HEK293 (cell line): ENCODE measurements at regions of chr5 and their contacts with region 1.

Region 1: GRCh38 chr5:139633295-139634027 is 14.7 kb upstream of the CXXC5 start:
- H3K4me3 ChIP-seq: no peak overlapping the region
- H3K27ac ChIP-seq: no peak overlapping the region
- H3K4me1 ChIP-seq: peaks cover 2% of the 10 kb centered on the region; the same call in 1 of the 2 replicates
- CTCF ChIP-seq: peak; percentile 96

Region 2: DNA sequence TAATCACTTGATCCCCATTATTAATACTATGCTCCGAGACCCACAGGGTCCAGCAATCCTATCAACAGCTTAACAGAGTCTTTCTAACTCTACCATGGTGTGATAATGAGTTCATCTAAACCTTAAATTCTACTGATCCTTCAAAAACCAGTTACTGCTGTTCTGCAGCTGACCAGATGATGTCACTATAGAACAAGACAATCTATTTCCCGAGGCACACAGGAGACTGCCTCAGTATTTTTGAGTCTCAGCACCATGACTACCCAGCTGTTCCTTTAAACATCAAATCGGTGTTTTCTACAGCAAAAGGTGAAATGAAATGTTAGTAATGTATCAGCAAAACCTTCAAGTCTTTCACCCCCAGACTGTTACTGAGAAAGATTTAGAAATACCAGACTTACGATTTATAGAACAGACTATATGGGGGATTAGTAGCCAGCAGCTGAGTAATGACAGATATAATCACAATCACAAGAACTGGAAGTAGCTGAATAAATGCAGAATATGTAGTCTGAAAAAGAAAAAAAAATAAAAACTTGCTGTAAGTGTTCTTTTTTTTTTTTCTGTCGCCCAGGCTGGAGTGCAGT is 211.1 kb before region 1 on chr5:
- CTCF ChIA-PET with region 1: interaction called, 11 read pairs
- POLR2A ChIA-PET with region 1: no interaction called
- H3K4me3 ChIP-seq: no peak overlapping the region
- H3K27ac ChIP-seq: no peak overlapping the region
- H3K4me1 ChIP-seq: no peaks in the 10 kb centered on the region
- CTCF ChIP-seq: peak; percentile 70

Region 3: DNA sequence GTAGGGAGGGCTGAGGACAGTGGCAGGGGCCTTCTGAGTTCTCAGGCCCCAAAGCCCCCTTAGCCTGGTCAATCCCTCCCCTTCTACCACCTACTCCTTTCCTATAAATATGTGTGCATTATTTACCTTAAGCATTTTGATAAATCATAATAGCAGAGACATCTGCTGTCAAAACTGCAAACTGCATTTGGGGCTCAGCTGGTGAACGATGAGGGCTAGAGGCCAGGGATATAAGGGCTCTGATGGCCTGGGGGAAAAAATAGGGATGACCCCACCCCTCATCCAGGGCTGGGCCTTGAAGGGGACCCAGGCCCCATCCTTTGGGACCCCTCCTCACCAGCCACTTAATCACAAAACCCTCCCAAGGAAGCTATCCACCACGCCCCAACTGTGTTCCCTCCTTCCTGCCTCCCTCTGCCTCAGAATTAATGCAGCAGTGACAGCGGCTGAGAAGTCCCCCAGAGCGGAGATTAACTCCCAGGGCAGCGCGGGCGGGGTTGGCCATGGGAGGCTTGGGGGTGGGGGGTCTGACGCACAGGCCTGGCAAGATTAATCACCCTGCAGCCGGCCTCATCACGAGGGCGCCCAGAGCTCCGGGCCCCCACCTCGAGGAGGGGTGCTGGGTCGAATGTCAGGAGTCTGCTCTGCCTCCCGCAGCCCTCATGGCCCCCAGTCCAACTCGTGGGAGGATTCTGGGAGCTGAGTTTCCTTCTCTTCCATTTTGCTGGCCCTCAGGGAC is 56.8 kb after region 1 on chr5:
- CTCF ChIA-PET with region 1: interaction called, 74 read pairs
- POLR2A ChIA-PET with region 1: no interaction called
- H3K4me3 ChIP-seq: no peak overlapping the region
- H3K27ac ChIP-seq: no peak overlapping the region
- H3K4me1 ChIP-seq: no peaks in the 10 kb centered on the region
- CTCF ChIP-seq: 0 out of 2 replicates have a peak, but pooled peaks have one; percentile 14

Region 4: DNA sequence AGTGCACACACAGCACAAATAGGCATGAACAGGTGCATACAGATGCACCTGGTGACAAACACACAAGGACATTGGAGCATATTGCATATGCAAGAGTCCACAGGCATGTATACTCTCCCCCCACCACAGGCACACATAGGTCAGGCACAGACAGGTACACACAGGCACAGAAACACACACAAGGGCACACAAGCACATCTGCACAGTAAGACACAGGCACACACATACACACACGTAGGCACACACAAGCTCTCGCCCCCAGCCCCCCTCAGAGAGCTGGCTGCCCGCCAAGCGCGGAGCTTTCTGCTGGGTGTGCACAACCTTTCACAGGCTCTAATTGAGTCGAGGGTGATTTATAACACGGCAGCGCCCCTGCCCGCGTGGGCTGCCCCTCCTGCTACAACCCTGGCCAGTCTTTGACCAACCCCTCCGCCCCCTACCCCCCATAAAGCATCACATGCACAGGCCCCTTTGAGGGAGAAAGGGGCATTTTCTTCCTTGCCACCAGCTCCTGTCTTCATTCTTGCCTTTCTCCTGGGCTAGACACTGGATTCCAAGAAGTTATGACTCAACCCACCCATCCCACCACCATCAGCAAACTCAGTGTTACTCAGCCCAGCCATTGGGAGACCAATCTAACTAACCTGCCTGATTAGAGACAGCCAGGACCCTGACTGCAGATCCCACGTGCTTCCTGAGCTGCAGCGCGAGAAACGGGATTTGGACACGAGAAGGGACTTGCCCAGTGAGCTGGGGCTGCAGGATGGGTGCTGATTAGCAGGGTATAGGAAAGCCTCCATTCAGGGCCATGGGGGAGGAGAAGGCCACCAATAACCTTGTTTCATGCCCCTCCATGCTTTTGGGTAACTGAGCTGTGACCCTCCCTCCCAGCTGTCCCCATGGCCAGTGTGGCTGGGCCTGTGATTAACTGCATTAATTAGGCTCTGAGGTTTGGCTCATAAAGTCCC is 119.3 kb after region 1 on chr5:
- CTCF ChIA-PET with region 1: interaction called, 12 read pairs
- POLR2A ChIA-PET with region 1: no interaction called
- H3K4me3 ChIP-seq: no peak overlapping the region
- H3K27ac ChIP-seq: no peak overlapping the region; the same call in 1 of the 2 replicates
- H3K4me1 ChIP-seq: peaks cover 6% of the 10 kb centered on the region
- CTCF ChIP-seq: no peak

Region 5: DNA sequence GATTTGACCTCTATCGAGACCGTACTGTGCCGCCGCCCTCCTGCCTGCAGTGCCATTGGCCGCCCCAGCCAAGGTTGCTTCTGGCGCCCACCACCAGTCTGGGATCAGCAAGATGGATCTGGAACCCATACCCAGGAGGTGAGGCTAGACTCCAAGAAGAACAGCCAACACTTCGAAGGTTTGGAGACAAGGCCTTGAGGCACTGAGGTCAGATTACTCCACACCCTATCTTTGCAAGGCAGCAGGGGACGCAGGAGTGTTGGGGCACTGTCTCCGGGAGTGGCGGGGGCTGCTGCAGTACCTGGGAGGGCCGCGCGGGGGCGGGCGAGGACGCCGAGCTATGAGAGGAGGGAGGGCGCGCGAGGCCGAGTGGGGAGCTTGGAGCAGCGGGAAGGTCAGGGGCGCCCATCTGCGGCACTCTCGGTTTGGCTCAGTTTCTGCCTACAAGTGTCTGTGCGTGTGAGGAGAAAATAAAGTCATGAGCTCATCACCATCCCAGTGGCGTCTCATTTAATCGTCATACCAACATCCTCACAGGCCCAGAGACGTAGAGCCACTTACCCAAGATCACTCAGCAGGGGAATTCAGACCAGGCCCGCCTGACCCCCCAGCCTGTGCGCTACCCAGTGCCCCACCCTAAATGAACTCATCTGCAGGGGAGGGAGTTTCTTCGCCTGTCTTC is 141.7 kb after region 1 on chr5:
- CTCF ChIA-PET with region 1: interaction called, 269 read pairs
- POLR2A ChIA-PET with region 1: no interaction called
- H3K4me3 ChIP-seq: no peak overlapping the region
- H3K27ac ChIP-seq: no peak overlapping the region
- H3K4me1 ChIP-seq: no peaks in the 10 kb centered on the region
- CTCF ChIP-seq: peak; percentile 84